Naive thymus-derived CD8-positive, alpha-beta T cell (primary cell): ENCODE measurements at regions of chr3 and their contacts with region 1.

Region 1: GRCh38 chr3:4493014-4493940 is at the start of gene ITPR1:
- DNase-seq: peak; percentile 90 to 100 (median 98)
- ATAC-seq: peak; percentile 85 to 87
- H3K4me3 Mint-ChIP-seq: peak within 1 kb of the TSS; percentile 93 to 98 (median 97)
- H3K27ac Mint-ChIP-seq: peak within 1 kb of the TSS; percentile 81 to 96 (median 93)
- H3K4me1 Mint-ChIP-seq: peaks cover 29 to 58% (median 37%) of the 10 kb centered on the region in 4 donors
- H3K27me3 Mint-ChIP-seq: no peaks in the 10 kb centered on the region
- polyA plus RNA-seq, gene ITPR1: 8.3 to 10.6 (median 9.7) TPM

Region 2: DNA sequence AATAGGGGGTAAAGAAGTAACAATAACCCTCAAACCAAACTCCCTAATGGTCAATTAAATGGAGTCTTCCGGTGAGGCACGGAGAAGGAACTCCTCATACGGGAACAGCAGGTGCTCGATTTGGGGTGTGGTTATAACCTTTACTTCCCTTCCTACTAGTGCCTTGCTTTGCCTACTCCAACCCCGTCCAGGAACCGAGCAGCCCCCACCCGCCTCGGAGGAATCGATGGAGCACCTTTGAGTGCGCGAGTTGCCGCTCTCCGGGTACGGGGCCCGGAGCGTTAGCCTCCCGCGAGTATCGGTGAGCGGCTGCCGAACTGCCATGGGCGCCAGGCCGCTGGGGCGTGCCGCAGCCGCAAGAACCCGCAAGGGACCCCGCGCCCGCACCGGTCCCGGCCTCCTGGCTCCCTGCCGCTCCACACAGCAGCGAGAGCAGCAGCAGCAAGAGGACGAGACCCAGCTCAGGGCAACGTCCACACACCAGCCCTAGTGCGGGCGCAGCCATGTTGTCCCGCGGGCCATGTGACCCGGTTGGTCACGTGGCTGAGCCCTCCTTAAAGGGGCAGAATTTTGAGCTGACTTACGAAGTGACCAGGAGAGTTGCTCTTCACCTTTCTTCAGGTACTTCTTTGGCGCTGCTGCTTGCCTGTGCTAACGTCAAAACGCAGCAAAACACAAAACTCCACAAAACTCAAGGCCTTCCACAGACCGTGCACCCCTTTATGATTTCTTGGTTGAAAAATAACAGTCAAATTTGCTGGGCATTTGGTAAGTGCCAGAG is 26.3 kb before region 1 on chr3 and contains the start of gene SUMF1:
- POLR2A ChIA-PET with region 1: interaction called, 59 read pairs
- DNase-seq: peak; percentile 56 to 86 (median 70)
- ATAC-seq: peak; percentile 98
- H3K4me3 Mint-ChIP-seq: peak within 1 kb of the TSS; percentile 84 to 94 (median 92)
- H3K27ac Mint-ChIP-seq: peak within 1 kb of the TSS; percentile 80 to 96 (median 94)
- H3K4me1 Mint-ChIP-seq: peaks cover 9 to 24% (median 17%) of the 10 kb centered on the region in 4 donors
- H3K27me3 Mint-ChIP-seq: peaks cover 0 to 4% (median 0%) of the 10 kb centered on the region in 5 donors
- polyA plus RNA-seq, gene SUMF1: 23.4 to 36.4 (median 30.6) TPM

Region 3: DNA sequence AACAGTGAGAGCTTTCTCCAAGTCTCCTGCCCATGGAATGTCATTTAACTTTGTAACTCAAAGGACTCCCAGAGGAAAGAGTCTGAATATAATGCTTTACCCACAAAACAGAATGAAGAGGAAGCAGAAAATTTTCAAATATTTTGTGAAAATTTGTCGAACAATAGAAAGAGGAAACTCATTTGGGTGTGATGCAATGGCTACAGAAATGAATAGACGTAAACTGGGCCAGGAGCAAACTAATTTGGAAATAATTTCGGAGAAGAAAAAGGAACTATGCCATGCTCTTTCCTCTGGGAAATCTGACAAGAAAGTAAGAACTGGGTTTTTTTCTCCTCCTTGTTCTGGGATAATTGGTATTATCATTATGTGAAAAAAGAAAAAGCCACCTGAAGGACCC is 15.0 kb before region 1 on chr3:
- POLR2A ChIA-PET with region 1: interaction called, 10 read pairs
- DNase-seq: no peak
- ATAC-seq: no peak
- H3K4me3 Mint-ChIP-seq: no peak overlapping the region
- H3K27ac Mint-ChIP-seq: no peak overlapping the region
- H3K4me1 Mint-ChIP-seq: peaks cover 0 to 12% (median 3%) of the 10 kb centered on the region in 4 donors
- H3K27me3 Mint-ChIP-seq: peaks cover 5 to 24% (median 9%) of the 10 kb centered on the region in 5 donors

Region 4: GRCh38 chr3:4504340-4505261 is 11.3 kb after region 1 on chr3:
- POLR2A ChIA-PET with region 1: interaction called, 65 read pairs
- DNase-seq: peak; percentile 18 to 76 (median 44)
- ATAC-seq: peak; percentile 86 to 88
- H3K4me3 Mint-ChIP-seq: peak overlapping the region; percentile 13 to 94 (median 88)
- H3K27ac Mint-ChIP-seq: peak overlapping the region; percentile 23 to 98 (median 93)
- H3K4me1 Mint-ChIP-seq: peaks cover 24 to 79% (median 47%) of the 10 kb centered on the region in 4 donors
- H3K27me3 Mint-ChIP-seq: no peaks in the 10 kb centered on the region

Region 5: DNA sequence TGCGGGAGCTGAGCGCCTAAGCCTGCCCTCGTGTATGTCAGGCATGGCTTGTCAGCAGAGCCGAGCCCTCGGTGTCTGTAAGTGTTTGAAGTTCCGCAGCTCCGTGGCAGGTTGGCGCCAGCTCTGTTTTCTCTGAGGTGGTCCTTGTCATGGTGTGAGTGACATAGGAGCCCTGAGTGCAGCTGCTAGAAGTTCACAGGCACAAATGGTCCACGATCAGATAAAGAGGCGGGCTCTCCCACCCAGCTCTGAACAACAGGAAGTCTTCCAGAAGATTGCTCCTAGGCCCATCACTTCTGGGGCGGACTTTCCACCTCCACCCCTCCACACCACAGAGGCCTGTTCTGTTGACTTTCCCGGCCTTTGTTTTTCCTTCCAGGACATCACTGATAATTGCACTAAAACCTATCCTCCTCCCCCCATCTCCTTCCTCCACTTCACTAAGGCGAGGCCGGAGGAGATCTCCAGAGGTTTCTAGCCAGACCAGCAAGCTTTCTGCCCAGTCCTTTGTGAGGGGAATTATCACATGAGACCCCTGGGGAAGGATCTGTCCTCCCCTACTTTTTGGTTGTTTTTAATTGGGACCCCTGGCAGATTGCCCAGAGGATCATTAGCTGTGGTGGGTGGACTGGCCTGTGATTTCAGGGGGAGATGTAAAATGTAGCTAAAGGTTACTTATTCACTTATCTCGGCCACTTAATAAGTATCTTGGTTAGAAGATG is 19.8 kb after region 1 on chr3:
- POLR2A ChIA-PET with region 1: interaction called, 87 read pairs
- DNase-seq: peak in 3 of 10 donors; percentile 14 to 31 (median 22)
- ATAC-seq: peak; percentile 58 to 87
- H3K4me3 Mint-ChIP-seq: no peak overlapping the region
- H3K27ac Mint-ChIP-seq: peak overlapping the region in 8 of 10 donors; percentile 25 to 82 (median 54)
- H3K4me1 Mint-ChIP-seq: peaks cover 39 to 85% (median 63%) of the 10 kb centered on the region in 4 donors
- H3K27me3 Mint-ChIP-seq: no peaks in the 10 kb centered on the region

Region 6: GRCh38 chr3:5187156-5187919 is 694.1 kb after region 1 on chr3 and contains the start of gene EDEM1:
- POLR2A ChIA-PET with region 1: interaction called, 17 read pairs
- DNase-seq: peak; percentile 85 to 95 (median 90)
- ATAC-seq: peak; percentile 85
- H3K4me3 Mint-ChIP-seq: peak within 1 kb of the TSS; percentile 91 to 100 (median 98)
- H3K27ac Mint-ChIP-seq: peak within 1 kb of the TSS; percentile 95 to 100 (median 99)
- H3K4me1 Mint-ChIP-seq: peaks cover 26 to 58% (median 45%) of the 10 kb centered on the region in 4 donors
- H3K27me3 Mint-ChIP-seq: no peaks in the 10 kb centered on the region
- polyA plus RNA-seq, gene EDEM1: 25.5 to 31.0 (median 26.0) TPM